Prostate gland (tissue), 2 donors: ENCODE measurements at regions of chr3 and their contacts with region 1.

Region 1: GRCh38 chr3:136343446-136344281 is 93.5 kb downstream of the PCCB start:
- DNase-seq: peak; percentile 70
- H3K4me3 ChIP-seq: no peak overlapping the region
- H3K27ac ChIP-seq: no peak overlapping the region
- H3K4me1 ChIP-seq: no peaks in the 10 kb centered on the region
- H3K27me3 ChIP-seq: no peaks in the 10 kb centered on the region
- CTCF ChIP-seq: no peak
- POLR2A ChIP-seq: no peak

Region 2: DNA sequence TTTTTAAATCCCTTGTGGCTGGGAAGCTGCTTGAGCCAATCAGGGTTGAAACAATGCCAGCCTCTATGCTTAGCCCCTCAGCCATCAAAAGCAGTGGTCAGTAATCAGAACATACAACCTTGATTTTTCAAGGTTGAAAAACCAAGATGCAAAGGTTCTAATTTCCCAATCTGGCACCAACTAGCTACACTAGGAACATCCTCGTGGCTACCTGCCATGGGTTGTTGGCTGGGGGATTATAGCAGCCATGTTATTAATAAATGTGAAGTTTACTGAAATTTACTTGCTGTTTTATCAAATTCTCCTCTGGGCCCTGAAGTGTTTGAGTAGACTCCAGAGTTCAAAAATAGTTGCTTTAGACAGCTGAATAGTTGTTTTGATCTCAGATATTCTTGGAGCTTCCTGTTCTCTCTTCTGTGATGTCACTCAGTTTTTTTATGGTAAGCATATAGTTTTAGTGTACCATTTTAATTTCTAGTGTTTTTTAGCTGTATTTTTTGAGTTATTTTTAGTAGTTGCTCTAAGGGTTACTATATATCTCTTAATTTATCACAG is 61.6 kb before region 1 on chr3:
- intact Hi-C with region 1: loop called (anchors 10 kb)
- DNase-seq: no peak
- H3K4me3 ChIP-seq: no peak overlapping the region
- H3K27ac ChIP-seq: no peak overlapping the region
- H3K4me1 ChIP-seq: no peaks in the 10 kb centered on the region
- H3K27me3 ChIP-seq: no peaks in the 10 kb centered on the region
- CTCF ChIP-seq: no peak
- POLR2A ChIP-seq: no peak